ENCODE measurements at regions of chr11 and their contacts with region 1.

Region 1: DNA sequence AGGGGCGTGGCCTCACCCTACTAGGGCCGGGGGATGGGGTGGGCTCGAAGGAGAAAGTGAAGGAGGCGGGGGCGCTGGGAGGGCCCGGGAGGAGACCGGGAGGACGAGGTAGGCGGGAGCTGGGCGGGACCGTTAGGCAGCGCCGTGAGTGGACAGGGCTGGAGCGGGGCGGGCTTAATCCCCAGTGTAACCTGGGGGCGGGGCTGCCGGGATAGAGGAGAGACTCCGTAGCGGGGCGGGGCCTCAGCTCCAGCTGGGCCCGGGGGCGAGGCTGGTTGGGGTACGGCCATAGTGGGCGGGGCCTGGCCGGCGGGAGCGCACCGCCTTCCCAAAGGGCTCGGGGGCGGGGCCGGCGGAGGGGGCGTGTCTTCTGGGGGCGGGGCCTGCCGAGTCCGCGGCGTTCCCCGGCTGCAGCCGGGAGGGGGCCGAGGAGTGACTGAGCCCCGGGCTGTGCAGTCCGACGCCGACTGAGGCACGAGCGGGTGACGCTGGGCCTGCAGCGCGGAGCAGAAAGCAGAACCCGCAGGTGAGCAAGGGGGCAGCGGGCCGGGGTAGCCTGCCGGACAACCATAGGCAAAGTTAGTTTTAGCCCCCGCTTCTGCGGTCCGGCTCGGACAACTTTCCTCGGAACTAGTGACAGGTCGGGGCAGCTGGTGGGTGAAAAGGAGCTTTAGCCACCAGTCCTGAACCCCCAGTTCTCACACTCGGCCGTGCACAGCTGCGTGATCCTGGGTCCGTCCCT is at the start of gene CD82:
- DNase-seq: peak; percentile 98
- H3K4me3 Mint-ChIP-seq: peak within 1 kb of the TSS; percentile 92
- H3K27ac Mint-ChIP-seq: peak within 1 kb of the TSS; percentile 92
- H3K4me1 Mint-ChIP-seq: peaks cover 66% of the 10 kb centered on the region
- H3K27me3 Mint-ChIP-seq: no peaks in the 10 kb centered on the region
- total RNA-seq, gene CD82: 499 and 500 TPM in 2 replicates

Region 2: GRCh38 chr11:44229098-44229497 is 336.3 kb before region 1 on chr11:
- intact Hi-C with region 1: no loop called
- DNase-seq: no peak
- H3K4me3 Mint-ChIP-seq: no peak overlapping the region
- H3K27ac Mint-ChIP-seq: no peak overlapping the region
- H3K4me1 Mint-ChIP-seq: peaks cover 7% of the 10 kb centered on the region
- H3K27me3 Mint-ChIP-seq: no peaks in the 10 kb centered on the region

Region 3: DNA sequence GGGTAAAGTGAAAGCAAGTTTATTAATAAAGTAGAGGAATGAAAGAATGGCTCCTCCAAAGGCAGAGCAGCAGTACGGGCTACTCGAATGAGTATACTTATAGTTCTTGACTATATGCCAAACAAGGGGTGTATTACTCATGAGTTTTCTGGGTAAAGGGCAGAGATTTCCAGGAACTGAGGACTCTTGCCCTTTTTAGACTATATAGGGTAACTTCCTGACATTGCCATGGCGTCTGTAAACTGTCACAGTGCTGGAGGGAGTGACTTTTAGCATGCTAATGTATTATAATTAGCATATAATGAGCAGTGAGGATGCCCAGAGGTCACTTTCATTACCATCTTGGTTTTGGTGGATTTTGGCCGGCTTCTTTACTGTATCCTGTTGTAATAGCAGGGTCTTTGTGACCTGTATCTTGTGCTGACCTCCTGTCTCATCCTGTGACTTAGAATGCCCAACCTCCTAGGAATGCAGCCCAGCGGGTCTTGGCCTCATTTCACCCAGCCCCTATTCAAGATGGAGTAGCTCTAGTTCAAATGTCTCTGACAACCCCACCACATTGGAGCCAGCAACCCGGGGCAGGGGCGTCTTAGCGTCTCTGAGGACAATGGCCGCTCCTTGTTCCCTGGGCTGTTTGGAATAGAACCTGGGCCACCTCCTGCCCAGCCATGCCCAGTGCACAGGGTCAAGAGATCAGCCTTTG is 34.8 kb before region 1 on chr11:
- intact Hi-C with region 1: loop called (anchors 1 kb)
- DNase-seq: peak; percentile 58
- H3K4me3 Mint-ChIP-seq: peak overlapping the region; percentile 68
- H3K27ac Mint-ChIP-seq: peak overlapping the region; percentile 89
- H3K4me1 Mint-ChIP-seq: peaks cover 40% of the 10 kb centered on the region
- H3K27me3 Mint-ChIP-seq: no peaks in the 10 kb centered on the region

Region 4: GRCh38 chr11:44611687-44612434 is 46.5 kb after region 1 on chr11:
- intact Hi-C with region 1: loop called (anchors 1 kb)
- DNase-seq: peak; percentile 68
- H3K4me3 Mint-ChIP-seq: peak overlapping the region; percentile 15
- H3K27ac Mint-ChIP-seq: peak overlapping the region; percentile 82
- H3K4me1 Mint-ChIP-seq: peaks cover 92% of the 10 kb centered on the region
- H3K27me3 Mint-ChIP-seq: no peaks in the 10 kb centered on the region

Region 5: GRCh38 chr11:44680982-44681597 is 115.7 kb after region 1 on chr11:
- intact Hi-C with region 1: no loop called
- DNase-seq: peak; percentile 73
- H3K4me3 Mint-ChIP-seq: peak overlapping the region; percentile 67
- H3K27ac Mint-ChIP-seq: peak overlapping the region; percentile 75
- H3K4me1 Mint-ChIP-seq: peaks cover 34% of the 10 kb centered on the region
- H3K27me3 Mint-ChIP-seq: no peaks in the 10 kb centered on the region

Region 6: DNA sequence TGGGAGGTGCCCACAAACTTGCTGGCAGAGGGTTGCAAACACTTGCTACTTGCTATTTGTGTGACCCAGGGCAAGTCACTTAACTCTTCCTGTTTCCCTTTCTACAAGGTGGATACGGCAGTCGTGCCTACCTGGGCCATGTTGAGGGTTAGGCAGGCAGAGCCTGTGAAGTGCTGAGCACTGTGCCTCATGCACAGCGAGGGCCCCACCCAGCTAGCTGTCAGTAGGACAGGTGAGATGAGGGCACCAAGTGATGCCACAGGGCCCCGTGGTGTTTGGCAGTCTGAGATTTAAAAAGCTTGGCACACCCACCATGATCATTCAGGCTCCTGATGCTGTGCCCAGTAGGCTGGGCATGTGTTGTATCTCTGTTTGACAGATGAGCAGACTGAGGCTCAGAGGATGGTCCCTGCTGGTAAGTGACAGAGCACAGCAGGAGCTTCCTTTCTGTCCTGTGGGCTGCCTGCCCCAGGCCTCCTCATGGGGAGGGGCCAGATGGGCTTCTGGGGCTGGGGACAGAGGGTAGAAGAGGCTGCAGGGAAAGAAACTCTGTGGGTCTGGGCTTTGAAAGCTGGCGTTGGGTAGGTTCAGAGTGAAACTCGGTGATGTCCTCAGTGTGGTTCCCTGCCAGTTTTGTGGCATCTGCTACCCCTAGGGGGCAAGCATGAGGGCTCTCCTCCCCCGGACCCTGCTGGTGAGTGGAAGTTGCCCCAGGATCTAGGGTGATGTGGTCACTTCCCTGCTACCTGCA is 220.6 kb after region 1 on chr11:
- intact Hi-C with region 1: no loop called
- DNase-seq: no peak
- H3K4me3 Mint-ChIP-seq: no peak overlapping the region
- H3K27ac Mint-ChIP-seq: no peak overlapping the region
- H3K4me1 Mint-ChIP-seq: no peaks in the 10 kb centered on the region
- H3K27me3 Mint-ChIP-seq: peaks cover 2% of the 10 kb centered on the region

Region 7: GRCh38 chr11:44861849-44862749 is 296.7 kb after region 1 on chr11:
- intact Hi-C with region 1: loop called (anchors 2 kb)
- DNase-seq: peak; percentile 76
- H3K4me3 Mint-ChIP-seq: no peak overlapping the region
- H3K27ac Mint-ChIP-seq: peak overlapping the region; percentile 68
- H3K4me1 Mint-ChIP-seq: peaks cover 21% of the 10 kb centered on the region
- H3K27me3 Mint-ChIP-seq: peaks cover 56% of the 10 kb centered on the region

Region 8: GRCh38 chr11:45102810-45103621 is 537.6 kb after region 1 on chr11:
- intact Hi-C with region 1: loop called (anchors 5 kb)
- DNase-seq: peak; percentile 55
- H3K4me3 Mint-ChIP-seq: peak overlapping the region; percentile 65
- H3K27ac Mint-ChIP-seq: peak overlapping the region; percentile 0
- H3K4me1 Mint-ChIP-seq: peaks cover 26% of the 10 kb centered on the region
- H3K27me3 Mint-ChIP-seq: peaks cover 21% of the 10 kb centered on the region

Measured in activated T-helper 1 cell treated with anti-CD3 and anti-CD28 coated beads, Interleukin-12 subunit alpha, Interleukin-12 subunit beta, Interleukin-2, Interleukin-4 antibody, amounts not matched to agents 30 ng/mL and 10 ng/mL and 1 ng/mL, durations not matched to agents 14 hours and 24 hours and 36 hours (primary cell).